ENCODE measurements at regions of chr3 and their contacts with region 1.

Region 1: GRCh38 chr3:143535994-143536784 is 312.1 kb downstream of the SLC9A9 start:
- DNase-seq: peak; percentile 58
- H3K4me3 Mint-ChIP-seq: no peak overlapping the region
- H3K27ac Mint-ChIP-seq: no peak overlapping the region
- H3K4me1 Mint-ChIP-seq: peaks cover 14% of the 10 kb centered on the region
- H3K27me3 Mint-ChIP-seq: no peaks in the 10 kb centered on the region

Region 2: DNA sequence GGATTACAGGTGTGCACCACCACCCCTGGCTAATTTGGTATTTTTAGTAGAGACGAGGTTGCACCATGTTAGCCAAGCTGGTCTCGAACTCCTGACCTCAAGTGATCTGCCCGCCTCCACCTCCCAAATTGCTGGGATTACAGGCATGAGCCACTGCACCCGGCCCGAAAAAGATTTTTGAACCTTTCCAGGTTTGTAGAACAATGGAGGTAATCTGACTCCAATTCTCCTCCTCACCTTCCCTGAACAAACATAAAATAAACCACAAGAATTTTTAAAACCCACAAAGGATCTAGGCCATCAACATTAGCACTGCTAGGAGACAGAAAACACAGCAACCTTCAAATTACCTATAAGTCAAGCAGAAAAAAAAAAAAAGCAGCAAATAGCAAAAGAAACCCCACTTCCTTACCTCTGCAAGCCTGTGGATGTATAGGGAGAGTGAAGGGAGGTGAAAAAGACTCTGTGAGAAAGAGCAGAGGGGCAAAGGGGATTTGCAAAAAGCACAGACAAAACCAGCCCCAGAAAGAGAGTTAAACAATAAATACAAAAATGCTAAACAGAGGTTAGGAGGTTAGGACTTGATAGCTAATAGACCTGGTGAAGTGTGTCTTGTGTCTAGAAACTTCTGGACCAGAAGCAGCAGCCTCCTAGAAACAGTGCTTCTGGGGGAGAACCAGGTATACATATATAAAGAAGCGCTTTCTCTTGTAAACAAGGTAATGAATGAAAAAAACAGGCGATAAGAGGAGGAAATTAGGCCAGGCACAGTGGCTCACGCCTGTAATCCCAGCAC is 1418.9 kb before region 1 on chr3:
- intact Hi-C with region 1: no loop called
- DNase-seq: no peak
- H3K4me3 Mint-ChIP-seq: no peak overlapping the region
- H3K27ac Mint-ChIP-seq: no peak overlapping the region
- H3K4me1 Mint-ChIP-seq: no peaks in the 10 kb centered on the region
- H3K27me3 Mint-ChIP-seq: no peaks in the 10 kb centered on the region

Region 3: DNA sequence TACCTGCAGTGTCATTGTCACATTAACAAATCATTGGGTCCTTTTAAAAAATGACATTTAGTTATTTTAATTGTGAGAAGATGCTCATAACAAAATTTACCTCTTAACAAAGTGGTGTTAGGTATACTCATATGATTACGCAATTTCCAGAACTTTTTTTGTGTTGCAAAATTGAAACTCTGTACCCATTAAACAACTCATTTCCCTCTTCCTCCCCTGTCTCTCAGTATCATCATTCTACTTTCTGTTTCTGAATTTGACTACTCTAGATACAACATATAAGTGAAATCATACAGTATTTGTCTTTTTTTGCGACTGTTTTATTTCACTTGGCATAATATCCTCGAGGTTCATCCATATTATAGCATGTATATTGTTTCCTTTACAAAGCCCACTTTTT is 475.3 kb before region 1 on chr3:
- intact Hi-C with region 1: loop called (anchors 1 kb)
- DNase-seq: no peak
- H3K4me3 Mint-ChIP-seq: peak overlapping the region; percentile 40
- H3K27ac Mint-ChIP-seq: peak overlapping the region; percentile 13
- H3K4me1 Mint-ChIP-seq: peaks cover 16% of the 10 kb centered on the region
- H3K27me3 Mint-ChIP-seq: no peaks in the 10 kb centered on the region

Region 4: GRCh38 chr3:143443851-143444331 is 92.3 kb before region 1 on chr3:
- intact Hi-C with region 1: loop called (anchors 1 kb)
- DNase-seq: peak; percentile 74
- H3K4me3 Mint-ChIP-seq: peak overlapping the region; percentile 9
- H3K27ac Mint-ChIP-seq: peak overlapping the region; percentile 23
- H3K4me1 Mint-ChIP-seq: peaks cover 30% of the 10 kb centered on the region
- H3K27me3 Mint-ChIP-seq: peaks cover 2% of the 10 kb centered on the region

Region 5: GRCh38 chr3:143585720-143586456 is 49.7 kb after region 1 on chr3:
- intact Hi-C with region 1: loop called (anchors 1 kb)
- DNase-seq: peak; percentile 59
- H3K4me3 Mint-ChIP-seq: no peak overlapping the region
- H3K27ac Mint-ChIP-seq: peak overlapping the region; percentile 62
- H3K4me1 Mint-ChIP-seq: peaks cover 14% of the 10 kb centered on the region
- H3K27me3 Mint-ChIP-seq: no peaks in the 10 kb centered on the region

Region 6: GRCh38 chr3:143654906-143655305 is 118.7 kb after region 1 on chr3:
- intact Hi-C with region 1: no loop called
- DNase-seq: no peak
- H3K4me3 Mint-ChIP-seq: no peak overlapping the region
- H3K27ac Mint-ChIP-seq: no peak overlapping the region
- H3K4me1 Mint-ChIP-seq: no peaks in the 10 kb centered on the region
- H3K27me3 Mint-ChIP-seq: no peaks in the 10 kb centered on the region

Region 7: GRCh38 chr3:143674100-143674968 is 138.1 kb after region 1 on chr3:
- intact Hi-C with region 1: loop called (anchors 5 kb)
- DNase-seq: peak; percentile 94
- H3K4me3 Mint-ChIP-seq: peak overlapping the region; percentile 21
- H3K27ac Mint-ChIP-seq: no peak overlapping the region
- H3K4me1 Mint-ChIP-seq: peaks cover 4% of the 10 kb centered on the region
- H3K27me3 Mint-ChIP-seq: no peaks in the 10 kb centered on the region

Measured in activated CD4-positive, alpha-beta T cell treated with anti-CD3 and anti-CD28 coated beads, Interleukin-2, amount 10 ng/mL, durations not matched to agents 24 days and 14 days (primary cell).